ENCODE measurements at regions of chr10 and their contacts with region 1.

Region 1: GRCh38 chr10:114735946-114736345 is 77.9 kb upstream of the ABLIM1 start:
- DNase-seq: no peak
- ATAC-seq: no peak
- H3K4me3 ChIP-seq: no peak overlapping the region
- H3K27ac ChIP-seq: no peak overlapping the region
- H3K4me1 ChIP-seq: peaks cover 0 to 64% (median 19%) of the 10 kb centered on the region in 12 donors
- H3K27me3 ChIP-seq: no peaks in the 10 kb centered on the region
- CTCF ChIP-seq: no peak
- POLR2A ChIP-seq: no peak

Region 2: DNA sequence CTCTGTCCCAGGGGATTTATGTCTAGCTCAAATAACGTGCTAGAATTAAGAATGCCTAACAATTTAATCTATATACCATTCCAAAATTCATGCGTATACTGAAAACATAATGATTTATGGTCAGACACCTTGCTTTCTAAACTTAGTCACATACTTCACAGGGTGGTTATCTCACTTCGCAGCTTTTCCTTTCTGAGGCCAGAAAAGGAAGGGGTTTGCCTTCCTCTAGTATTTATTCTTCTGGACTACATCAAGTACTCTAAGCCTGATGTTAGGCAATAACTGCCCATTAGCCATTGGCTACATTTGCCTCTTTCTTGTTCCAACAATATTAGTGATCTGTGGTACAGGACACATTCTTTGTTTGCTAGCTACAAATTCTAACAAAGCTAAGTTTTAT is 13.1 kb after region 1 on chr10:
- intact Hi-C with region 1: loop called in 1 of 10 experiments (anchors 2 kb)
- DNase-seq: no peak
- ATAC-seq: peak; percentile 68 to 86 (median 80)
- H3K4me3 ChIP-seq: no peak overlapping the region
- H3K27ac ChIP-seq: peak overlapping the region; percentile 63 to 86 (median 78)
- H3K4me1 ChIP-seq: peaks cover 7 to 73% (median 31%) of the 10 kb centered on the region in 12 donors
- H3K27me3 ChIP-seq: no peaks in the 10 kb centered on the region
- CTCF ChIP-seq: no peak
- POLR2A ChIP-seq: no peak

Measured in heart left ventricle (tissue), 16 donors.